GM10248 (cell line): ENCODE measurements at regions of chr11 and their contacts with region 1.

Region 1: DNA sequence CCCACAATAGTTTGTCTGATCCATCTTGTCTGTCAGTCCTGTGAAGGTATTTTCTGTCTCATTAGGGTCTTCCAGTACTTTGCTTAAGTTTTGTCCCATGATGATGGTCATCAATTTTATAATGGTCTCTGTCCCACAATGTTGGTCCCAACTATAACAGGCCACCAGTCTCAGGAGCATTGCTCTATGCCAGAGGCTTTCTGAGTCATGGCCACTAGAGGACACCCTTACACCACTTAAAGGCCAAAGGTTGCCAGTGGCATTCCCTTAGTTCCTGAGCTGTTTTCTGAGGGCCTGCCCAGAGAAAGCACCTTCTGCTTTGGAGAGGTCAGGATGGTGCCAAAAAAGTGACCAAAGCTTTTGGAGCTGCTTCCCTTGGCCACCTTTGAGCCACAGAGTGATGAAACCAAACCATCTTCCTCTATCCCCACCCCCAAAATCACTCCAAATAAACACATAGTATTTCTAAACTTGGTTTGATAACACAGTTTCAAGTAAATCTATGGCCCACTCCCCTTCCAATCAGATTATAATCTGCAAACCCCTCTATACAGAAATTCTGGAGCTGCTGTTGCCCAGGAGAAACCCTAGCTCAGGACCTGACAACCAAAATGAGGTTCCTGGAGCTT is 19.3 kb downstream of the EIF3F start:
- DNase-seq: peak; percentile 58
- CTCF ChIP-seq: peak; percentile 88

Region 2: DNA sequence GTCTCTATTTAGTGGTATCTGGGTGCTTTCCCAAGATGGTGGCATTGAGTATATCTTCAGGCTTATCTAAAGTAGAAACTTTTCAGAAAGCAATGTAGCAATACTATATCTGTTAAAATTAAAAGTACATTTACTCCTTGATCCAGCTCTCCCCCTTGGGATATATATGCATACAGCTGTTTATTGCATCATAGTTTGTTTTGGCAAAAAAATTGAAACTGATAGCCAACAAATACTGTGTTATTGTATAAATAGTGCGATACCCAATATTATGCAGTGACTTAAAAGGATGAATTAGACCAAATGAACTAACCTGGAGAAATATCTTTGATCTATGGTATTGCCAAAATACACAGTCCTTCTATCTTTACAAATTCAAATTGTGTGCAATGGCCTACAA is 56.5 kb before region 1 on chr11:
- CTCF ChIA-PET with region 1: no interaction called
- POLR2A ChIA-PET with region 1: no interaction called
- DNase-seq: no peak
- CTCF ChIP-seq: no peak

Region 3: DNA sequence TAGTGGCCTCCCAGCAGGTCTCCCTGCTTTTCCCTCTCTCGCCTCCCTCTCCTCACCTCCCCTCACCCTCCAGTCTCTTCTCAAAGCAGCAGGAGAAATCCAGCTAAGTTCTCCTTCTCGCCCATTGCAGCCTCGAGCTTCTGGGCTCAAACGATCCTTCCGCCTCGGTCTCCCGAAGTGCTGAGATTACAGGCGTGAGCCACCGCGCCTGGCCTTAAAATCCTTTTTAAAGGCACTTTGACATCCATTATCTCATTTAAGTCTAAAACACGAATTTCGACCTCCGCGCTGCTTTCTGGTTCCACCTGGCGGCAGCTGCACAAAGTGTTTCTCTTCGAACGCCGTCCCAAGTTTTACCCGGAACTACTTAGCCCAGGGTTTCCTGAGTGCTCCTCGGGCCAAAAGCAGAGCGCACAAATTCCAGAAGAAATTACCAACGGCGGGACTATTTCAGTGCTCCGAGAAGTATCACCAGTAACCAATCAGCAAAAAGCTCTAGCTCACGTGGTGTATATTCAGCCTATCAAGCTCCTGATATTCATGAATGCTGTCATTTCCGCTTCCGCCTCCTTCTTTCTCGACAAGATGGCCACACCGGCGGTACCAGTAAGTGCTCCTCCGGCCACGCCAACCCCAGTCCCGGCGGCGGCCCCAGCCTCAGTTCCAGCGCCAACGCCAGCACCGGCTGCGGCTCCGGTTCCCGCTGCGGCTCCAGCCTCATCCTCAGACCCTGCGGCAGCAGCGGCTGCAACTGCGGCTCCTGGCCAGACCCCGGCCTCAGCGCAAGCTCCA is 19.5 kb before region 1 on chr11 and contains the start of gene EIF3F:
- CTCF ChIA-PET with region 1: interaction called, 10 read pairs
- POLR2A ChIA-PET with region 1: no interaction called
- DNase-seq: peak; percentile 93
- CTCF ChIP-seq: peak; percentile 87

Region 4: GRCh38 chr11:7994581-7995278 is 11.7 kb before region 1 on chr11:
- CTCF ChIA-PET with region 1: interaction called, 10 read pairs
- POLR2A ChIA-PET with region 1: no interaction called
- DNase-seq: no peak
- CTCF ChIP-seq: no peak

Region 5: DNA sequence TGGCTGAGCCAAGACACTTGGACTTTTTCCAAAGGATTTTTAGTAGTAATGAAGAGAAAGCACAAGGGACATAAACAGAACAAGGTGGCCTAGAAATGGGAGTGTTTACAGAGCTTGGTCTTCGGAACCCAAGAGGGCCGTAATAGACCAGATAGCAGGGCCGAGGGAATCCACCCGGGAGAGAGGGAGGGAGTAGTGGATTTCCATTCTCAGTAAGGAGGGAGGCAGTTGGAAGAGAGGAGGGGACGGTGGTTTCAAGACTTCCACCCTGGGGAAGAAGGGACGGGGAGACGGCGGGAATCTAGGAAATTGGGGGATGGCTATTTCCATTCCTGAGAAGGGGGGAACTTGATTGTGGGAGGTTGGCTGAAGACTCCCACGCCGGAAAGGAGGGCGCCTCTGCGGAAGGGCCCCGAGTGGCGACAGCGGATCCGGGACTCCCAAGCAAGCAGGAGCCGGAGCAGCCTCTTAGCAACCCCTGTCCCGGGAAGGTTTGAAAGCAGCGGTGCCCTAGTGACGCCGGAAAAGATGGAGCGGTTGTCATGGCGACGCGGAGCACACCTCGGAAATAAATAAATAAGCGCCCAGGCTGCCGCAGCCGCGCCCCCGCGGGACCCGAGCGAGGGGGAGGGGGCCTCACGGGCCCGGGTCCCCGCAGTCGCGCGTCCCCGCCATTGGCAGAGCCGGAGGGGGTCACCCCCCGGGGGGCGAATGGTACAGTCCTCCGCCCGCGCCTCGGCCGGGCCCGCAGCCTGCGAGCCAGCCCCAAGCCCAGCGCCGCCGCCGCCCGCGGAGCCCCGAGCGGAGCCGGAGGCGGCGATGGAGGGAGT is 12.2 kb after region 1 on chr11:
- CTCF ChIA-PET with region 1: interaction called, 39 read pairs
- POLR2A ChIA-PET with region 1: no interaction called
- DNase-seq: peak; percentile 54
- CTCF ChIP-seq: no peak

Region 6: GRCh38 chr11:8080674-8081590 is 74.5 kb after region 1 on chr11 and contains the start of gene TUB:
- CTCF ChIA-PET with region 1: interaction called, 408 read pairs
- POLR2A ChIA-PET with region 1: no interaction called
- DNase-seq: no peak
- CTCF ChIP-seq: no peak

Region 7: DNA sequence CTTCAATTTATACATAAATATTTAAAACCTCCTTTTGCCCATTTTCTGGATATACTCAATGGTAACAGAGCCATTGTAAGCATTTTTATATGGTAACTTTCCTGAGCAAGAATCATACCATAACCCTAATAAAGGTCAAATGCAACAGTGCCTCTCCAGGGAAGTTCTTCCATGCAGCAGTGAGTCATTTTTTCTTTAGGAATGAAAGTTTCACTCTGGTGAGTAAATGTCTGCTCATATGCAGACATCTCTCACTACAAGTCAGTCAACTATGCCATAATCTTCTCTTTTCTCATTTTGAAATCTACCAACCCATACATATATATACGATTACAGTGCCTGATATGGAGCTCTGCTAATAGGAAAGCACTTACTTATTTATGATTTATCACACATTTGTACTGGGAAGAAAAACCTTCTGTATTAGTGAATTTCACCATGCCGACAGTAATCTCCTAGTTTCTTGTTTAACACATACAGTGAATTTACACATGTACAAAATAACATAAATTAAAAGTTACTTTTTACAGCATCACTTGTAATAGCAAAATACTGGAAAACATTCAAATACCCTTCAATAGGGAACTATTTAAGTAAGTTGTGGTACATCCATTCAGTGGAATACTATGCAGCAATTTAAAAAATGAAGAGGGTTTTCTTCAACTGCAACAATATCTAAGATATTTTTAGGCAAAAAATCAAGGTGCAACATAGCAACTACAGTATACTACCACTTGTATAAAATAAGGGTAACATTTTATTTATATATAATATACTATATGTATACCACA is 571.5 kb after region 1 on chr11:
- CTCF ChIA-PET with region 1: no interaction called
- POLR2A ChIA-PET with region 1: no interaction called
- DNase-seq: no peak
- CTCF ChIP-seq: no peak